Activated CD4-positive, alpha-beta memory T cell treated with anti-CD3 and anti-CD28 coated beads, Interleukin-2, amount 10 ng/mL, durations not matched to agents 7 days and 5 days (primary cell): ENCODE measurements at regions of chr6 and their contacts with region 1.

Region 1: DNA sequence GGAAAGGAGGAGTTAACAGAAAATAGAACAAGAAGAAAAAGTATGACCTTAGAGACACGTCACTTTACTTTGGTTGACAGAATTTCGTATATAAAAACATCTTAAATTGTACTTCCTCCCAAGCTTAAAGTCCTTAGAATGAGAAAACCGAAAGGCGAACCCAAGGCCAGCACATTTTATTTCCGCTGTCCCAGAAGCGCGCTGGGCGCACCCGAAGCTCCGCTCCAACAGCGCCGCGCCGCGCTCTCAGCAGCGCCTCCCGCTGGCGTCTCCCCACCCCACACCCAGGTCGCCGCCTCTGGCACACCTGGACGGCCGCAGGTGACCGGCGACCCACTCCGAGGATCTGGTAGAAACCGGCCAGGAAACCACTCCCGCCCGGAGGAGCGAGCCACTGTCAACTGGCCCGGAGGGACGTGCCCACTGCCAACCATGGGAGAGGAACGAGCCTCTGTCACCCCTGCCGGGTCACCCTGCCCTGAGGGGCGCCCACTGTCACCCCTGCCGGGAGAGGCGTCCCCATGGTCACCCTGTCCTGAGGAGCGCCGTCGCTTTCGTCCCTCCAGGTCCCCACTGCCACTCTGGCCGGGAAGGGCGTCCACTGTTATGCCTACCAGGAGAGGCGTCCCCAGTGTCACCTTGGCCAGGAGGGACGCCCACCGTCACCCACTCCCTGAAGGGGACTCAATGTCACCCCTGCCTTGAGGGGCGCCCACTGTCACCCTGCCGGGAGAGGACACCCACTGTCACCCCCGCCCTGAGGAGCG is 824 bp downstream of the MPC1 start:
- DNase-seq: peak; percentile 80
- H3K4me3 Mint-ChIP-seq: peak overlapping the region; percentile 91
- H3K27ac Mint-ChIP-seq: peak overlapping the region; percentile 80
- H3K4me1 Mint-ChIP-seq: peaks cover 19% of the 10 kb centered on the region
- H3K27me3 Mint-ChIP-seq: no peaks in the 10 kb centered on the region

Region 2: DNA sequence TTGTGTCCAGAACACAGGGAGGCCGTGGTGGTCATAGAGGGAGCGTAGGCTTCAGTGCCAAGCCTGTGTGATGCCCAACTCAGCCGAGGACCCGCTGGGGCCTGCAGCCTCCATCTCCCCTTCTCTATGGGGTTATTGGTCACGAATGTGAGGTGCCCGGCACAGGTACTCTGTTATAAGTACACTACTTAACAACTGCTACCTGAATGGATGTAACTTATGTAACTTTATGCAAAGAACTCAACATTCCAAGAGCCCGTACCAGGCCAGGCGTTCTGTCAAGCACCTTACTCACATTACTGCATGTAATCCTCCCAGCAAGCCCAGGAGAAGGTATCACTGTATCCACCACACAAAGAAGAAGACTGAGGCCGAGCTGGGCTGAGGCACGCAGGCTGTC is 189.8 kb before region 1 on chr6:
- CTCF ChIA-PET with region 1: no interaction called
- POLR2A ChIA-PET with region 1: no interaction called
- DNase-seq: no peak
- H3K4me3 Mint-ChIP-seq: no peak overlapping the region
- H3K27ac Mint-ChIP-seq: no peak overlapping the region
- H3K4me1 Mint-ChIP-seq: no peaks in the 10 kb centered on the region
- H3K27me3 Mint-ChIP-seq: no peaks in the 10 kb centered on the region

Region 3: DNA sequence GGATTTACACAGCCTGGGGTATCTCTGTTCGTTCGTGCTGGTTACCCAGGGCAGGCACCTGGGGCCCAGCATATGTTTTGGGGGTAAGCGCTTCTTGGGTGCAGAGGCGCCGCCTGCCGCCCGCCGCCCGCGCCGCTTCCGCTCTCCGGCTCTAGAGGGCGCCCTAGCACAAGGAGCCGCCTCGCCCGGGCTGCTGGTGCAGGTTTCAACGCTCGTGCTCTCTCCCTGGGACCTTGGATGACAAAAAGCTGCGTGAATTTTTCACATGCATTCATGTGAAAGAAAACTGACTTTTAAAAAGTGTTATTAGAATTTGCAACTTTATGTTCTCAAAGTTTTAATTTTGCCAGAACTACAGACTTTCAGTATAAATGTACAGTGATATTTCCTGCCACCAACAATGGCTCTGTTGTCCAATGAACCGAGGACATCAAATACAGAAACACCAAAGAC is 106.2 kb before region 1 on chr6:
- CTCF ChIA-PET with region 1: interaction called, 31 read pairs
- POLR2A ChIA-PET with region 1: no interaction called
- DNase-seq: peak; percentile 82
- H3K4me3 Mint-ChIP-seq: no peak overlapping the region
- H3K27ac Mint-ChIP-seq: no peak overlapping the region
- H3K4me1 Mint-ChIP-seq: peaks cover 6% of the 10 kb centered on the region
- H3K27me3 Mint-ChIP-seq: peaks cover 11% of the 10 kb centered on the region

Region 4: GRCh38 chr6:166308033-166308768 is 73.7 kb before region 1 on chr6 and contains the start of gene PRR18:
- CTCF ChIA-PET with region 1: interaction called, 38 read pairs
- POLR2A ChIA-PET with region 1: interaction called, 6 read pairs
- DNase-seq: no peak
- H3K4me3 Mint-ChIP-seq: peak within 1 kb of the TSS; percentile 17
- H3K27ac Mint-ChIP-seq: no peak within 1 kb of the TSS
- H3K4me1 Mint-ChIP-seq: peaks cover 5% of the 10 kb centered on the region
- H3K27me3 Mint-ChIP-seq: peaks cover 46% of the 10 kb centered on the region
- total RNA-seq, gene PRR18: not detected

Region 5: GRCh38 chr6:166333172-166333995 is 48.5 kb before region 1 on chr6:
- CTCF ChIA-PET with region 1: interaction called, 11 read pairs
- POLR2A ChIA-PET with region 1: interaction called, 6 read pairs
- DNase-seq: peak; percentile 62
- H3K4me3 Mint-ChIP-seq: peak overlapping the region; percentile 43
- H3K27ac Mint-ChIP-seq: peak overlapping the region; percentile 55
- H3K4me1 Mint-ChIP-seq: peaks cover 51% of the 10 kb centered on the region
- H3K27me3 Mint-ChIP-seq: no peaks in the 10 kb centered on the region

Region 6: GRCh38 chr6:166355552-166355951 is 26.4 kb before region 1 on chr6:
- CTCF ChIA-PET with region 1: interaction called, 13 read pairs
- POLR2A ChIA-PET with region 1: no interaction called
- DNase-seq: no peak
- H3K4me3 Mint-ChIP-seq: no peak overlapping the region
- H3K27ac Mint-ChIP-seq: no peak overlapping the region
- H3K4me1 Mint-ChIP-seq: no peaks in the 10 kb centered on the region
- H3K27me3 Mint-ChIP-seq: peaks cover 54% of the 10 kb centered on the region

Region 7: DNA sequence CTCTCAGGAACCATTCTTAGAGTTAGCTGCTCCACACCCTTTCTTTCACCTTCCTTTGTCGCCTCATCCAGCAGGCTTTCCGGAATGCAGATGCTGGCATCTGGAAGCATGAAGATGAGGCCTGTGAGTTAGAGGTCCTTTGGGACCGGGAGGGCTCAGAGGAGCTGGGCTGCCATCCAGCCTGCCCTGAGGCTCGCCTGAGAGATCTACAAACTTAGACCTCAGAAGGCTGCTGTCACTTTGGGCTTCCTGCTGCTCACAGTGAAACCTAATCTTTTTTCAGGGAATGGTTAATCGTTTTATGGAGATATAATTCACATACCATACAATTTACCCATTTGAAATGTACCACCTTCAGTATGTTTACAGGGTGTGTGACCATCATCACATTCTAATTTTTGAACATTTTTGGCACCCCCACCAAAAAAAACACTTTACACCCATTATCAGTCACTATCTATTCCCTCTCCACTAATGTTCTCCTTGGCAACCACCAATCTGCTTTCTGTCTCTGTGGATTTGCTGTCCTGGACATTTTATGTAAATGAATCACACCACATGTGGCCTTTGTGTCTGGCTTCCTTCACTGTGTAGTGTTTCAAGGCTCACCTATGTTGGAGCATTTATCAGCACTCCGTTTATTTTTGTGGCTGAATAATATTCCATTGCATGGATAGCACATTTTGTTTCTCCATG is 20.8 kb after region 1 on chr6:
- CTCF ChIA-PET with region 1: interaction called, 15 read pairs
- POLR2A ChIA-PET with region 1: interaction called, 3 read pairs
- DNase-seq: peak; percentile 7
- H3K4me3 Mint-ChIP-seq: no peak overlapping the region
- H3K27ac Mint-ChIP-seq: no peak overlapping the region
- H3K4me1 Mint-ChIP-seq: peaks cover 2% of the 10 kb centered on the region
- H3K27me3 Mint-ChIP-seq: peaks cover 5% of the 10 kb centered on the region

Region 8: DNA sequence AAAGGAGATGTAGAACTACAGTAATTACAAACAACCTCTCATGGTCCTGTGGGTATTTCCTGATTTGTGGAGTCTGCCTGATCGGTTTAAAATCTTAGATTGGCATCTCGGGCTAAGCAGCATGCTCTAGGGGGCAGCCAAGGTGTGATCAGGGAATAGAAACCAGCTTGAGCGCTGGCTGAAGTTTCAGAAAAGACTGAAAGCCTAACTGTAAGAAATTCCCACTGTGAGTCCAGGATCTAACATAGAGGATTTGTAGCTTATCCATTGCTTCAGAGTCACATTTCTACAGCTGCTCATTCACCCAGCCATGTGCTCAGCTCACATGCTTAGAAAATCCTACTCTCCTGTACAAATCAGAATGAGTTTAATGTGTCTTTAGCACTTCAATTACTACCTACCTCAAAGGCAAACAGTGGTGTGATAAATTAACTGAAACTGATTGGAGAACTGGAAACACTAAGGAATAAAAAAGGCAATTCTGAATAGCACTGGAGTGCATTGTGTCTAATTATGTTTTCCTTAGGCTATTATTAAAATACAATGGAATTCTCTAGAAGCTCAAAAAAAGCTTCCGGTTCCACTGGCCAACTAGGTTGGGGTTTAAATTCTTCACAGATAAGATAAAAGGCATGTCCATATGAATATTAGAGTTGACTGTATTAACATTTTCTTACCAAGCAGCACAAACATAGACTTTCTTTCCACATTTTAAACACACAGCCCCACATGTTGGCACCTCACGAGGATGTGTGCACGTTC is 74.7 kb after region 1 on chr6:
- CTCF ChIA-PET with region 1: no interaction called
- POLR2A ChIA-PET with region 1: no interaction called
- DNase-seq: no peak
- H3K4me3 Mint-ChIP-seq: no peak overlapping the region
- H3K27ac Mint-ChIP-seq: no peak overlapping the region
- H3K4me1 Mint-ChIP-seq: no peaks in the 10 kb centered on the region
- H3K27me3 Mint-ChIP-seq: peaks cover 1% of the 10 kb centered on the region